ENCODE measurements at regions of chr11 and their contacts with region 1.

Region 1: GRCh38 chr11:90288212-90288821 is 65.5 kb upstream of the CHORDC1 start:
- ATAC-seq: peak in 1 of 8 experiments; percentile 24
- H3K4me3 ChIP-seq: no peak overlapping the region
- H3K27ac ChIP-seq: no peak overlapping the region
- H3K4me1 ChIP-seq: peaks cover 0 to 15% of the 10 kb centered on the region in 2 donors

Region 2: GRCh38 chr11:90468923-90469322 is 180.6 kb after region 1 on chr11:
- in situ Hi-C with region 1: loop called in 1 of 9 experiments (anchors 25 kb)
- ATAC-seq: peak in 1 of 8 experiments; percentile 22
- H3K4me3 ChIP-seq: no peak overlapping the region
- H3K27ac ChIP-seq: no peak overlapping the region
- H3K4me1 ChIP-seq: no peaks in the 10 kb centered on the region